ENCODE measurements at regions of chr10 and their contacts with region 1.

Region 1: GRCh38 chr10:77641788-77642397 is 4.3 kb upstream of the KCNMA1 start:
- DNase-seq: peak in 1 of 2 experiments; percentile 71
- H3K4me3 ChIP-seq: no peak overlapping the region
- H3K27ac ChIP-seq: no peak overlapping the region
- H3K4me1 ChIP-seq: peaks cover 0 to 6% (median 4%) of the 10 kb centered on the region in 4 experiments; a peak in 6 of 7 replicates
- H3K27me3 ChIP-seq: peaks cover 11 to 37% (median 34%) of the 10 kb centered on the region in 4 experiments
- CTCF ChIP-seq: peak in 2 of 3 experiments; percentile 69 to 71; a peak in 3 of 4 replicates
- EP300 ChIP-seq: no peak
- POLR2A ChIP-seq: no peak
- RAD21 ChIP-seq: peak; percentile 87 to 89

Region 2: DNA sequence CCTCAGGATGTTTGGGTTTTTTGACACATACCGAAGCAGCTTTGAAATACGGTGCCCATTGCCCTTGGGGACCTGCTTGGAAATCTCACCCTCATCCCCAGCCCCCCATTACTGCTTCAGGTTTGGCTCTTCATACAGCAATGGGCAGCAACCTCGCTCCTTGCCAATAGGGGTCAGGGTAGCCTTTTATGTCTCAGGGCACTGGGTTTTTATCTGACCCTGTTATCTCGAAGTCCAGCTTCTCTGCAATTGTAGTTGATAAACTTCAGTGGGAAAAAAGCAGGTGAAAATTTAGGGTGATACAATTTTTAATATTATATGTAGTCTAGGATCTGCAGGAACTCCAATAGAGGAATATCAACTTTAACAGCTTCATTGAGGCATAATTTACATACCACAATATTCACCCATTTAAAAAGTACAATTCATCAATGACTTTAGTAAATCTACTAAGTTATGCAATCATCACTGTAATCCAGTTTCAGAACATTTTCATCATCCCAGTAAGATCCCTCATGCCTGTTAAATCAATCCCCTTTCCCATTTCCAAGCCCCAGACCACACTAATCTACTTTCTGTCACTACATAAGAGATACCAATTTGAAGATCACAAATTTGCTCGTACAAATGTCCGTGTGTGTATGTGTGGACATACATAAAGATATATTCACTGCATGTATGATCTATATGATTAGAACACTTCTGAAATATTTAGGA is 390.4 kb before region 1 on chr10:
- CTCF ChIA-PET with region 1: interaction called, 19 read pairs
- POLR2A ChIA-PET with region 1: no interaction called
- DNase-seq: no peak
- H3K4me3 ChIP-seq: no peak overlapping the region
- H3K27ac ChIP-seq: no peak overlapping the region
- H3K4me1 ChIP-seq: no peaks in the 10 kb centered on the region
- H3K27me3 ChIP-seq: no peaks in the 10 kb centered on the region; a peak in 1 of 7 replicates
- CTCF ChIP-seq: peak; percentile 73 to 87 (median 75)
- EP300 ChIP-seq: no peak
- POLR2A ChIP-seq: no peak
- RAD21 ChIP-seq: peak; percentile 88 to 91

Region 3: DNA sequence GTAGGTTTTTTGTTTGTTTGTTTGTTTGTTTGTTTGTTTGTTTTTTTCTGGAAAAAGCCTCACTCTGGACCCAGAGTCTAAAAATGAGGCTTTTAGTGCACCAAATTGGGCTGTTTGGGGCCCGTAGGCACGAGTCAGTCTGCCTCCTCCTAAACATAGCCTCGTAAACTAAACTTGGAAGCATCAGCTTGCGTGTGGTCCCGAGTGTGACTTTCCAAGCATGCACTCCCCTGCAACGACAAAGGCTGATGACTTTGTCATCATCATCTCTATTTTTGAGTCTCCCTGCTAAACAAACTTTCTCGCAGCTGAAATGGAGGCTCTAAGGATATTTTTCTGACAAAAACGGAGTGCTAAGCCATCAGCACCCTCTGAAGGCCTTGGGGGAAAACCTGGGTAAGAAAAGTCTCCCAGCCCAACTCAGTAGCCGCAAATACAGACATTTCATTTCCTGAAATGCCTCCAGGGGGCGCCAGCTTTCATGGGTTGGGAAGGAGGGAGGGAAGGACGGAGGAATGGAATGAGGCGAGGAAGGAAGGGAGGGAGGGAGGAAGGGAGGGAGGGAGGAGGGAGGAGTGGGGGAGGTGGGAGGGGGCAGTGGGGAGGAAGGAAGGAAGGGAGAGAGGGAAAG is 250.2 kb before region 1 on chr10:
- CTCF ChIA-PET with region 1: interaction called, 49 read pairs
- POLR2A ChIA-PET with region 1: no interaction called
- DNase-seq: peak; percentile 62 to 97
- H3K4me3 ChIP-seq: no peak overlapping the region
- H3K27ac ChIP-seq: no peak overlapping the region
- H3K4me1 ChIP-seq: peaks cover 0 to 8% (median 5%) of the 10 kb centered on the region in 4 experiments; a peak in 4 of 7 replicates
- H3K27me3 ChIP-seq: no peaks in the 10 kb centered on the region
- CTCF ChIP-seq: peak; percentile 68 to 82 (median 70)
- EP300 ChIP-seq: no peak
- POLR2A ChIP-seq: no peak
- RAD21 ChIP-seq: peak; percentile 71 to 83

Region 4: DNA sequence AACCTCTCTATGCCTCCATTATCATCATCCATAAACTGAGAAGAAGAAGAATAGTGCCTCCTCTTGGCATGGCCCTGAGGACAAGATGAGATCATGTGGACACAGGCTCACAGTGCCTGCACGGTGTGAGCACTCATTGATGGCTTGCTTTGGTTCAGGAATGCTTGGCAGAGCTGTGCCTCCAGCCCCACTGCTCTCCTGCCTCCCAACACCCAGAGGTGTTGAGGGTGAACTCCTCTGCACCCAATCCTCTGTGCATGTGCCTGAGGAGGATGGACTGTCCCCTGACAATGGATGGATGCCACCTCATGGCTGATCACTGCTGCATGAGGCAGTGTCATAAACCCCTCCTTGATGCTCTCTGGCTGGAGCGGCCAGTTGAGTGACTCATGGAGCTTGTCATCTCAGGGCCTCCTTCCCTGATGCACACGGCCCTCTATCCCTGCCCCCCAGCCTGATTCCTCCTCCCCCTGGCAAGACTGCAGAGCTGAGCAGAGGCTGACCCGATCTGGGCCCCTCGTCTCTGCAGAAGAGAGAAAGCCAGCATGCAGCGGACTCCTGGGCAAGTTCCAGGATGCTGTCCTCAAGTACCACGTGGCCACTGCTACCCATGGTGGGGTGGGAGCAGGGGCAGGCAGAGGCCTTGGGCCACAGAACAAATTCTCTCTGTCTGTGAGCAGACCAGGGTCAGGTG is 140.6 kb before region 1 on chr10:
- CTCF ChIA-PET with region 1: interaction called, 25 read pairs
- POLR2A ChIA-PET with region 1: no interaction called
- DNase-seq: no peak
- H3K4me3 ChIP-seq: no peak overlapping the region
- H3K27ac ChIP-seq: no peak overlapping the region
- H3K4me1 ChIP-seq: peaks cover 2 to 9% (median 3%) of the 10 kb centered on the region in 4 experiments; a peak in 3 of 7 replicates
- H3K27me3 ChIP-seq: no peaks in the 10 kb centered on the region
- CTCF ChIP-seq: no peak
- EP300 ChIP-seq: no peak
- POLR2A ChIP-seq: no peak
- RAD21 ChIP-seq: no peak

Region 5: DNA sequence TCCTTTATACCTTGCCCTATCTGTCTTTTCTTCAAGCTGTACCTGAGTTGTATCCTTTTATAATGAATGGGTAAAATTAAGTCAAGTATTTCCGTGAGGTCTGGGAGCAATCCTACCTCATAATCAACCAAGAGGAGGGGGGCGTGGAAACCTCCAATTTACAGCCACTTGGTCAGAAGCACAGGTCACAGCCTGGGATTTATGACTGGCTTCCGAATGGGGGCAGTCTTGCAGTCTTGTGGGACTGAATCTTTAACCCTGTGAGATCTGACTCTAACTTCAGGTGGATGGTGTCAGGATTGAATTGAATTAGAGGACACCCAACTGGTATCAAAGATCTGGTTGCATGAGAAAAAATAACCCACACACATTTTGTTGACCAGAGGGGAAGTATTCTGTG is 19.2 kb after region 1 on chr10:
- CTCF ChIA-PET with region 1: interaction called, 12 read pairs
- POLR2A ChIA-PET with region 1: no interaction called
- DNase-seq: peak in 1 of 2 experiments; percentile 42
- H3K4me3 ChIP-seq: no peak overlapping the region
- H3K27ac ChIP-seq: no peak overlapping the region
- H3K4me1 ChIP-seq: peaks cover 0 to 8% (median 2%) of the 10 kb centered on the region in 4 experiments; a peak in 3 of 7 replicates
- H3K27me3 ChIP-seq: no peaks in the 10 kb centered on the region
- CTCF ChIP-seq: peak; percentile 28 to 52 (median 34); a peak in 3 of 4 replicates
- EP300 ChIP-seq: no peak
- POLR2A ChIP-seq: no peak
- RAD21 ChIP-seq: peak; percentile 24 to 33; a peak in 2 of 4 replicates